ENCODE measurements at regions of chr17 and their contacts with region 1.

Region 1: GRCh38 chr17:51803161-51803560 is 355.4 kb downstream of the CA10 start:
- DNase-seq: no peak
- ATAC-seq: no peak
- H3K4me3 ChIP-seq: no peak overlapping the region
- H3K27ac ChIP-seq: no peak overlapping the region
- H3K4me1 ChIP-seq: no peaks in the 10 kb centered on the region
- H3K27me3 ChIP-seq: no peaks in the 10 kb centered on the region
- CTCF ChIP-seq: no peak
- POLR2A ChIP-seq: no peak
- RAD21 ChIP-seq: no peak

Region 2: GRCh38 chr17:51391982-51392654 is 411.0 kb before region 1 on chr17:
- CTCF ChIA-PET with region 1: interaction called, 12 read pairs
- POLR2A ChIA-PET with region 1: no interaction called
- dilution Hi-C with region 1: no loop called
- in situ Hi-C with region 1: no loop called
- intact Hi-C with region 1: no loop called
- DNase-seq: no peak
- ATAC-seq: no peak
- H3K4me3 ChIP-seq: no peak overlapping the region
- H3K27ac ChIP-seq: no peak overlapping the region
- H3K4me1 ChIP-seq: no peaks in the 10 kb centered on the region
- H3K27me3 ChIP-seq: no peaks in the 10 kb centered on the region
- CTCF ChIP-seq: no peak
- POLR2A ChIP-seq: no peak
- RAD21 ChIP-seq: no peak

Region 3: DNA sequence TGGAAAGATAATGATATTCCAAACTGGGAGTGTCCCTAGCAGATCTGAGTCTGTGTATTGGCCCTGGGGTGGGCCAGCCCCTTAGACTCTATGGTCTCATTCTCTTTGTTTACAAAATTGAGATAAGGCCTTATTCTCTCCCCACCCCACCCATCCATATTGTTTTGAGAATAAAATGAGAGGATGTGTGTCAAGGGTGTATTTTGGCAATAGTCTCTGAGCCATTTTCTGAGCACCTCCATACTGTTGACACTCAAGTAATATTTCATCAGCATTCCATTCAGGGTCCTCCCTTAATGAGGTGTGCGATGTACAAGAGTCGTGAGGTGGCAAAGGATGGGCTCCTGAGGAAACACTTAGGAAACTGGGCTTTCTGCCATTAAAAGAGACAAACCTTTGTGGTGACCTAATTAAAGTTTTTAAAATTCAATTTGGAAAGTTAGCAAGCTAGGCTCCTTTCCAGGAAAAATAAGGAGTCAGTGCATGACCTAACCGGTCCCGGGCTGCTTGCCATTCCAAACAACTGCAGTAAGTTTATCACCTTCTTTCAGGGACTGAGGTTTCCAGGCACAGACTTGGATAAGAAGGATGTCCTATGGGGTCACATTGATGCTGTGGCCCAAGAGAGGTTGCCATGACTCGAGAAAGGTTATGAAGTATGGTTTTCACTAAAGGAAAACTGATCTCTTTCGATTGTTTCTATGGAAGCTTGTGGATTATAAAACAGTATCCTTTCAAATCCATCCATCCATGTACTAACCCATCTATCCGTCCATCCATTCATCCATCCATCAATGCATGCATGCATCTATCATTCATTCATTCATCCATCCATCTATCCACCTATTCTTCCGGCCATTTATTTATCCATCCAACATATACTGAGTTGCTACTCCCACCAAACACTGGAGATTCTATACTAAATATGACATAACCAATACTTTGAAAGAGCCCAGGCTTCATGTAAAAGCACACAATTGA is 99.5 kb before region 1 on chr17:
- CTCF ChIA-PET with region 1: no interaction called
- POLR2A ChIA-PET with region 1: no interaction called
- dilution Hi-C with region 1: no loop called
- in situ Hi-C with region 1: no loop called
- intact Hi-C with region 1: no loop called
- DNase-seq: no peak
- ATAC-seq: no peak
- H3K4me3 ChIP-seq: no peak overlapping the region
- H3K27ac ChIP-seq: no peak overlapping the region
- H3K4me1 ChIP-seq: no peaks in the 10 kb centered on the region
- H3K27me3 ChIP-seq: no peaks in the 10 kb centered on the region
- CTCF ChIP-seq: no peak
- POLR2A ChIP-seq: no peak
- RAD21 ChIP-seq: no peak

Region 4: GRCh38 chr17:51722994-51723393 is 80.2 kb before region 1 on chr17:
- CTCF ChIA-PET with region 1: no interaction called
- POLR2A ChIA-PET with region 1: no interaction called
- dilution Hi-C with region 1: no loop called
- in situ Hi-C with region 1: no loop called
- intact Hi-C with region 1: no loop called
- DNase-seq: no peak
- ATAC-seq: no peak
- H3K4me3 ChIP-seq: no peak overlapping the region
- H3K27ac ChIP-seq: no peak overlapping the region
- H3K4me1 ChIP-seq: no peaks in the 10 kb centered on the region
- H3K27me3 ChIP-seq: no peaks in the 10 kb centered on the region
- CTCF ChIP-seq: no peak
- POLR2A ChIP-seq: no peak
- RAD21 ChIP-seq: no peak

Measured in IMR-90 (cell line).